Gastrocnemius medialis (tissue), 4 donors: ENCODE measurements at regions of chr11 and their contacts with region 1.

Region 1: DNA sequence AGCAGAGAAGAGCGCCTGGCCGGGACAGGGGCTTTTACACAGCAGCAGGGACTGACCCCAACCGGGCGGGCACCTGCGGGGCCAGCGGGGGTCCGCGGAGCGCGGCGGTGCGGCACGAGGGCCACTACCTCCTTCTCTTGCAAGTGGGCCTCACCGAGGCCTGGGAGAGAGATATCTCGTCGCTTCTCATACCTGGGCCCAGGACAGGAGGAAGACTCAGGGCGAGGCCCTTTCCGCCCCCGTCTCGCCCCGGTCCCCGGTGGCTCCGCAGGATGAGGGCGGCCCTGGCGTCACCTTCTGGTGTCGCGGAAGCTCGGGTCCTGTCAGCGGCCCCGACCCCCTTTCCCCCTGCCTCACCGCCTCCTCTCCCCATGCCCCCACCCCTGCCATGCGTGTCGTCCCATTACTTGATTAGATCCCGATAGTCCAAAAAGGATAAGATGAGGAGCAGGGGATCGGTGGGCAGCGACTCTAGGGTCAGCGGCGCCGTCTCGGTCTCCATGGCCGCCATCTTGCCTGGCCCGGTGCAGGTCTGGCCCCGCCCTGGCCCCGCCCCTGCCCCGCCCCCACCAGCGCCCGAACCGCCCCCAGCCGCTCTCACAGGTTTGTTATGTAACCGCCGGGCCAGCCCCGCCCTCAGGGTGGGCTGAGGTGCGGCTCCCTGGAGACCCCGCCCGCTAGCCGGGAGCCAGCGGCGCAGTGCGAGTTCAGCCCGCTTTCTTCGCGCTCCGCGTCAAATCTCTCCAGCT is at the start of gene FBXO3:
- DNase-seq: peak; percentile 60 to 72
- ATAC-seq: peak; percentile 84 to 88
- H3K4me3 ChIP-seq: peak within 1 kb of the TSS; percentile 91 to 98 (median 96)
- H3K27ac ChIP-seq: peak within 1 kb of the TSS; percentile 93 to 96 (median 93)
- H3K4me1 ChIP-seq: peaks cover 27 to 32% of the 10 kb centered on the region in 2 donors
- H3K27me3 ChIP-seq: no peaks in the 10 kb centered on the region
- CTCF ChIP-seq: no peak
- POLR2A ChIP-seq: peak; percentile 53 to 54
- total RNA-seq, gene FBXO3: 31.2 to 45.8 (median 33.4) TPM

Region 2: GRCh38 chr11:33753304-33753967 is 20.7 kb before region 1 on chr11:
- in situ Hi-C with region 1: no loop called
- intact Hi-C with region 1: loop called (anchors 2 kb)
- DNase-seq: peak; percentile 72 to 81
- ATAC-seq: peak; percentile 98 to 99
- H3K4me3 ChIP-seq: peak overlapping the region in 3 of 4 donors; percentile 14 to 31 (median 16)
- H3K27ac ChIP-seq: peak overlapping the region; percentile 84 to 94 (median 90)
- H3K4me1 ChIP-seq: peaks cover 33 to 34% of the 10 kb centered on the region in 2 donors
- H3K27me3 ChIP-seq: no peaks in the 10 kb centered on the region
- CTCF ChIP-seq: no peak
- POLR2A ChIP-seq: peak; percentile 26 to 71

Region 3: GRCh38 chr11:33869481-33870422 is 95.6 kb after region 1 on chr11:
- in situ Hi-C with region 1: no loop called
- intact Hi-C with region 1: no loop called
- DNase-seq: peak; percentile 31 to 72
- ATAC-seq: peak; percentile 84 to 86
- H3K4me3 ChIP-seq: peak overlapping the region; percentile 66 to 85 (median 76)
- H3K27ac ChIP-seq: peak overlapping the region; percentile 52 to 82 (median 74)
- H3K4me1 ChIP-seq: peaks cover 10 to 12% of the 10 kb centered on the region in 2 donors
- H3K27me3 ChIP-seq: no peaks in the 10 kb centered on the region
- CTCF ChIP-seq: no peak
- POLR2A ChIP-seq: no peak

Region 4: GRCh38 chr11:34044664-34045485 is 270.7 kb after region 1 on chr11:
- in situ Hi-C with region 1: no loop called
- intact Hi-C with region 1: no loop called
- DNase-seq: no peak
- ATAC-seq: no peak
- H3K4me3 ChIP-seq: no peak overlapping the region
- H3K27ac ChIP-seq: no peak overlapping the region
- H3K4me1 ChIP-seq: no peaks in the 10 kb centered on the region
- H3K27me3 ChIP-seq: no peaks in the 10 kb centered on the region
- CTCF ChIP-seq: no peak
- POLR2A ChIP-seq: no peak

Region 5: GRCh38 chr11:34105079-34105956 is 331.2 kb after region 1 on chr11 and contains the start of gene NAT10:
- in situ Hi-C with region 1: no loop called
- intact Hi-C with region 1: loop called (anchors 10 kb)
- DNase-seq: peak; percentile 97 to 99
- ATAC-seq: peak; percentile 95 to 98
- H3K4me3 ChIP-seq: peak within 1 kb of the TSS; percentile 71 to 97 (median 82)
- H3K27ac ChIP-seq: peak within 1 kb of the TSS; percentile 84 to 94 (median 90)
- H3K4me1 ChIP-seq: peaks cover 19 to 22% of the 10 kb centered on the region in 2 donors
- H3K27me3 ChIP-seq: no peaks in the 10 kb centered on the region
- CTCF ChIP-seq: peak in 4 of 5 experiments; percentile 19 to 44 (median 28)
- POLR2A ChIP-seq: peak; percentile 70 to 74
- total RNA-seq, gene NAT10: 17.2 to 27.7 (median 19.4) TPM

Region 6: GRCh38 chr11:34594603-34595002 is 820.4 kb after region 1 on chr11:
- in situ Hi-C with region 1: no loop called
- intact Hi-C with region 1: no loop called
- DNase-seq: no peak
- ATAC-seq: no peak
- H3K4me3 ChIP-seq: no peak overlapping the region
- H3K27ac ChIP-seq: no peak overlapping the region
- H3K4me1 ChIP-seq: no peaks in the 10 kb centered on the region
- H3K27me3 ChIP-seq: peaks cover 0 to 5% (median 4%) of the 10 kb centered on the region in 3 donors
- CTCF ChIP-seq: no peak
- POLR2A ChIP-seq: no peak

Region 7: DNA sequence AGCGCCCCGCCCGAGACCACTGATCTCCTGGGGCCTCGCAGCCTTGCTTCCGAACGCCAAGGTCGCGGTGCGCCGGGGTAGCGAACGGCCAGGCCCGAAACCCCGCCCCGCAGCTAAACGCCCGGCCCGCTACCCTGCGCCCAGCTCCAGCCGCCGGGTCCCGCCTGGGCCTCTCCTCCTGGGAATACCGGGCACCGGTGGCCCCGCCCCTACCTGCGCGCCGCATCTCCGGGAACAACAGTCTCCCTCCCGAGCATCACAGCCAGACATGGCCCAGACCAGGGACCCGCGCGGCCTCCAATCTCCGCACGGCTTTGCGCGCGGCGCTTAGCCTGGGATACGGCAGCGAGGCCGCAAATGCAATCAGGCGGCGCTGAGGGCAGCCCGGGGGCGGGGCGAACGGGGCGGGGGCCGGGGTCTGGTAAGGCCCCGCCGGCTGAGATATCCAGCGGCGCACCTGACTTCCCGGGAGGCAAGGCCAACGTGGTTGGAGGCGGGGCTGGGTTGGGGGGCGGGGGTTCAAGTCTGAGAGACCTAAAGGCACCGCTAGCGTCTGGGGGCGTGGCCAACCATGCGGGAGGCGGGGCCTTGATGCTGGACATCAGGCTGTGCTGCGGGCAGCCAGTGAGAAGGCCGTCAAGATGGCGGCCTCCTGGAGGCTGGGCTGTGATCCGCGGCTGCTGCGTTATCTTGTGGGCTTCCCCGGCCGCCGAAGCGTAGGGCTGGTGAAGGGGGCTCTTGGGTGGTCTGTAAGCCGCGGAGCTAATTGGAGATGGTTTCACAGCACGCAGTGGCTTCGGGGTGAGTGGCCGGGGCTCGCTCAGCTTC is 1142.1 kb after region 1 on chr11 and contains the starts of genes APIP and PDHX:
- in situ Hi-C with region 1: no loop called
- intact Hi-C with region 1: loop called (anchors 5 kb)
- DNase-seq: peak; percentile 97 to 99
- ATAC-seq: peak; percentile 86 to 92
- H3K4me3 ChIP-seq: peak within 1 kb of the TSS; percentile 86 to 93 (median 91)
- H3K27ac ChIP-seq: peak within 1 kb of the TSS; percentile 96 to 99 (median 97)
- H3K4me1 ChIP-seq: peaks cover 29 to 35% of the 10 kb centered on the region in 2 donors
- H3K27me3 ChIP-seq: no peaks in the 10 kb centered on the region
- CTCF ChIP-seq: peak in 1 of 5 experiments; percentile 6
- POLR2A ChIP-seq: peak; percentile 93 to 96
- total RNA-seq, gene APIP: 22.5 to 49.1 (median 31.5) TPM
- total RNA-seq, gene PDHX: 77.7 to 101 (median 87.3) TPM